CD4-positive, alpha-beta memory T cell (primary cell): ENCODE measurements at regions of chr16 and their contacts with region 1.

Region 1: GRCh38 chr16:85330694-85331188 is 218.5 kb upstream of the CIBAR2 start:
- DNase-seq: no peak
- H3K4me3 ChIP-seq: no peak overlapping the region
- H3K4me3 Mint-ChIP-seq: peak overlapping the region in 1 of 8 donors; percentile 37
- H3K27ac ChIP-seq: no peak overlapping the region
- H3K27ac Mint-ChIP-seq: no peak overlapping the region
- H3K4me1 ChIP-seq: no peaks in the 10 kb centered on the region
- H3K4me1 Mint-ChIP-seq: peaks cover 4 to 17% (median 14%) of the 10 kb centered on the region in 4 donors
- H3K27me3 ChIP-seq: no peaks in the 10 kb centered on the region
- H3K27me3 Mint-ChIP-seq: peaks cover 18 to 19% of the 10 kb centered on the region in 2 donors

Region 2: GRCh38 chr16:85305996-85306792 is 24.5 kb before region 1 on chr16:
- CTCF ChIA-PET with region 1: interaction called, 4 read pairs
- POLR2A ChIA-PET with region 1: no interaction called
- intact Hi-C with region 1: loop called (anchors 1 kb)
- DNase-seq: peak; percentile 58 to 75 (median 62)
- H3K4me3 ChIP-seq: no peak overlapping the region
- H3K4me3 Mint-ChIP-seq: peak overlapping the region; percentile 31 to 62 (median 51)
- H3K27ac ChIP-seq: no peak overlapping the region
- H3K27ac Mint-ChIP-seq: peak overlapping the region; percentile 24 to 87 (median 69)
- H3K4me1 ChIP-seq: peaks cover 47% of the 10 kb centered on the region
- H3K4me1 Mint-ChIP-seq: peaks cover 12 to 48% (median 18%) of the 10 kb centered on the region in 4 donors
- H3K27me3 ChIP-seq: no peaks in the 10 kb centered on the region
- H3K27me3 Mint-ChIP-seq: peaks cover 0 to 11% of the 10 kb centered on the region in 2 donors

Region 3: DNA sequence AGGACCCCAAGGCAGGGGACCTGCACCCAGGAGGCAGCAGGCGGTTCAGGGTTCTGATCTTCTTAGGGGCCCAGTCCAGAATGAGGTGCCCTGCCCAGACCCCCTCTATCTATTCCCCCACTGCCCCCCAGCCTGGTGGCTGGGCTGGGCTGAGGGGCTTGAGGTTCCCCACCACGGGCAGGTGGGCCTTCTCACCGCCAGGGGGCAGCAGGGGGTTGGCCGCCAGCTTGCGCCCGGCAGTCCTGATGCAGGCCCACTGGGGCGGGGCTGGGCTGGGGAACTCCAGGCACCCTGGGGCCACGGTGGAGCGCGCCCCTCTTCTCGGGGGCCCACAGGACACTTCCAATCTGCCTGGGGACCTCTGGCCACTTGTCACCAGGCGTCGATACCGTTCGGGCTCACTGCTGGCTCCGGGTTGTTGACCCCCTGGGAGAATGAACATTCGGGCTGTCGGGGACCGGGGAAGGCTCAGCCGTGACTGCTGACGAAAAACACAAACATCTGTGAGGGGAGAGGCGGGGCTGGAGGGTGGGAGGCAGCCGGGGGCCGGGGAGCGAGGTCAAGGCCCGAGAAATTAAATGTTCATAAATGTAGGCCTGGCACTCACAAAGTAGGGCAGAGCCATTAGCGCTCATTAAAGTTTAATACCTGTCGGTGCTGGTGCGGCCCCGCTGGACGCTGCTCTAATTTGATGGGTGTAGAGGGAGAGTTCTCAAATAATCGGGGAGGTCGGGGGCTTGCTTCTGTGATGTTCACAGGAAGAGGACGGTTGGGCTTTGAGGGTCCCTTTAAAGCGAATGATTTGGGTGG is 63.1 kb after region 1 on chr16:
- CTCF ChIA-PET with region 1: no interaction called
- POLR2A ChIA-PET with region 1: no interaction called
- intact Hi-C with region 1: no loop called
- DNase-seq: peak; percentile 40 to 55 (median 50)
- H3K4me3 ChIP-seq: no peak overlapping the region
- H3K4me3 Mint-ChIP-seq: no peak overlapping the region
- H3K27ac ChIP-seq: no peak overlapping the region
- H3K27ac Mint-ChIP-seq: no peak overlapping the region
- H3K4me1 ChIP-seq: no peaks in the 10 kb centered on the region
- H3K4me1 Mint-ChIP-seq: no peaks in the 10 kb centered on the region
- H3K27me3 ChIP-seq: no peaks in the 10 kb centered on the region
- H3K27me3 Mint-ChIP-seq: peaks cover 0 to 2% of the 10 kb centered on the region in 2 donors

Region 4: GRCh38 chr16:85610508-85611332 is 280.0 kb after region 1 on chr16:
- CTCF ChIA-PET with region 1: no interaction called
- POLR2A ChIA-PET with region 1: no interaction called
- intact Hi-C with region 1: no loop called
- DNase-seq: peak; percentile 81 to 85 (median 84)
- H3K4me3 ChIP-seq: peak overlapping the region; percentile 37 to 47
- H3K4me3 Mint-ChIP-seq: peak overlapping the region; percentile 84 to 96 (median 86)
- H3K27ac ChIP-seq: no peak overlapping the region
- H3K27ac Mint-ChIP-seq: peak overlapping the region; percentile 78 to 92 (median 89)
- H3K4me1 ChIP-seq: peaks cover 32% of the 10 kb centered on the region
- H3K4me1 Mint-ChIP-seq: peaks cover 3 to 45% (median 16%) of the 10 kb centered on the region in 4 donors
- H3K27me3 ChIP-seq: no peaks in the 10 kb centered on the region
- H3K27me3 Mint-ChIP-seq: no peaks in the 10 kb centered on the region